CD4-positive, alpha-beta memory T cell (primary cell): ENCODE measurements at regions of chr18 and their contacts with region 1.

Region 1: DNA sequence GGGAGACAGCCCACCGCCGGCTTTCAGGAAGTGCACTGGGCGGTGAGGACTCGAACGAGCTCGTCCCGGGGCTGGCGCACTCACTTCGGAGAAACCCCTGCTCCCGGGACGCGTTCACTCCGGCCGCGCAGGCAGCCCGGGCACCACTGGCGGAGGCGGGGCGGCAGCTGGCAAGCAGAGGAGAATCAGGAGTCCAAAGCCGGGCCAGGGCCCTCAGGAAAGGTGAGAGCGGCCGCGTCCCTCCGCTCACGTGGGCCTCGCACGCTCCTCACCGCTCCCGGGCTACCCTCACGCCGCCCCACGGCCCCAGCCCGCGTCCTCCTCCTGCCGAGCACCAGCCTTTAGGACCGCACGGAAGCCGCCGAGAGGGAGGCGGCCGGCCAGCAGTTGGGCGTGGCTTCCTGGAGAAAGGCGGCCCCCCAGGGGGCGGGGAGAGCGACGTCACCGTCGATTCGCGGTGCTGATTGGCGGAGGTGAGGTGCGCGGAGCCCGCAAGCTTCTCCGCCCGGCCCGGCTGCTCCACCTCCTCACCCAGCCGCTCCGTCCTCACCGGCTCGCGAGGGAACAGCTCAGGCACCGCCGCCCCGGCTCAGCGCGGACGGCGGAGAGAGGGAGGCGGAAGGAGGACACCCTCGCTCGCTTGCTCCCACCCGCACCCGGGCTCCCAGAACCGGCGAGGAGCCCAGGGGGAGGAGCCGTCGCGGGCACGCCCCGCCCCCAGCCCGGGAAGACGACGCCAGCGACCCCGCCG is at the start of gene ZCCHC2:
- DNase-seq: peak; percentile 97 to 100 (median 98)
- H3K4me3 ChIP-seq: peak within 1 kb of the TSS; percentile 38 to 98
- H3K4me3 Mint-ChIP-seq: peak within 1 kb of the TSS; percentile 90 to 99 (median 96)
- H3K27ac ChIP-seq: peak within 1 kb of the TSS; percentile 93
- H3K27ac Mint-ChIP-seq: peak within 1 kb of the TSS; percentile 80 to 96 (median 87)
- H3K4me1 ChIP-seq: peaks cover 34% of the 10 kb centered on the region
- H3K4me1 Mint-ChIP-seq: peaks cover 21 to 45% (median 32%) of the 10 kb centered on the region in 4 donors
- H3K27me3 ChIP-seq: no peaks in the 10 kb centered on the region
- H3K27me3 Mint-ChIP-seq: no peaks in the 10 kb centered on the region
- total RNA-seq, gene ZCCHC2: 51.7 to 52.2 TPM

Region 2: DNA sequence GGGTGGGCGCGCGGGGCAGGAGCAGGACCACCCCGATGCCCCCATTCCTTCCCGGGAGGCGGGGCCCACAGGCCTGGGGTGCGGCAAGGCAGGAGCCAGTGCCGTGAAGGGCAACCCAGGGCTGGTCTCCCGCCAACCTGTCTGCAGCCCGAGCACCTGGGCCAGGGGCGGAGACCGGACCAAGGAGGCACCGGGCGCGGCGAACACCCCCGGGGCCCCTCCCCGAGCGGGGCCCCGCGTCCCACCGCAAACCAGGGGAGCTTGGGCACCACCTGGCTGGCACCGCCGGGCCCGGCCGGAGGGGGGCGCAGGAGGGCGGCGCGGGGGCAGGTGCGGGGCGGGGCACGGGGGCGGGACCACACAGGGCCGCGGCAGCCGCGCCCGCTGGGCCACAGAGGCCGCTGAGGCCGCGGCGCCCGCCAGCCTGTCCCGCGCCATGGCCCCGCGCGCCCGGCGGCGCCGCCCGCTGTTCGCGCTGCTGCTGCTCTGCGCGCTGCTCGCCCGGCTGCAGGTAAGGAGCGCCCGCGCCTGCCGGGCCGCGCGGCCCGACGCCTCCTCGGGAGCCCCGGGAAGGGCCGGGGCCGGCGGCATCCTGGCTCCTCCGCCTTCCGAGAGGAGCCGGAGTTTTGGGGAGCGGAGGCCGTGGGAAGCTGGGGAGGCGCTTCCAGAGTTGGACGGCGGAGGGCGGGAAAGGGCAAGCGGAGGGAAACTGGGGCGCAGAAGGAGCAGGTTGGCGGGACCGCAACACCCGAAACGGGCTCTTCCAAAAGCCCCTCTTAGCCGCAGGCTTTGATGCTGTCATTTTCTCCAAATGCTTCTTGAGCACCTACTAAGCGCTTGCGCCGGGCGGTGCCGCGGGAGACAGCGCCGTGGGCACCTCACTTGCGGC is 197.5 kb before region 1 on chr18 and contains the start of gene TNFRSF11A:
- CTCF ChIA-PET with region 1: no interaction called
- POLR2A ChIA-PET with region 1: no interaction called
- intact Hi-C with region 1: loop called (anchors 5 kb)
- DNase-seq: peak; percentile 46 to 60 (median 51)
- H3K4me3 ChIP-seq: peak within 1 kb of the TSS; percentile 22 to 58
- H3K4me3 Mint-ChIP-seq: peak within 1 kb of the TSS; percentile 70 to 92 (median 86)
- H3K27ac ChIP-seq: no peak within 1 kb of the TSS
- H3K27ac Mint-ChIP-seq: peak within 1 kb of the TSS in 5 of 7 donors; percentile 20 to 91 (median 82)
- H3K4me1 ChIP-seq: peaks cover 19% of the 10 kb centered on the region
- H3K4me1 Mint-ChIP-seq: peaks cover 15 to 40% (median 26%) of the 10 kb centered on the region in 4 donors
- H3K27me3 ChIP-seq: peaks cover 35% of the 10 kb centered on the region
- H3K27me3 Mint-ChIP-seq: peaks cover 53 to 57% of the 10 kb centered on the region in 2 donors
- total RNA-seq, gene TNFRSF11A: 1.3 TPM

Region 3: GRCh38 chr18:62425465-62426195 is 97.0 kb before region 1 on chr18:
- CTCF ChIA-PET with region 1: interaction called, 10 read pairs
- POLR2A ChIA-PET with region 1: interaction called, 21 read pairs
- intact Hi-C with region 1: no loop called
- DNase-seq: peak; percentile 50 to 63 (median 61)
- H3K4me3 ChIP-seq: no peak overlapping the region
- H3K4me3 Mint-ChIP-seq: peak overlapping the region in 1 of 8 donors; percentile 18
- H3K27ac ChIP-seq: no peak overlapping the region
- H3K27ac Mint-ChIP-seq: peak overlapping the region in 4 of 7 donors; percentile 19 to 66 (median 52)
- H3K4me1 ChIP-seq: peaks cover 8% of the 10 kb centered on the region
- H3K4me1 Mint-ChIP-seq: peaks cover 13 to 16% (median 16%) of the 10 kb centered on the region in 4 donors
- H3K27me3 ChIP-seq: no peaks in the 10 kb centered on the region
- H3K27me3 Mint-ChIP-seq: peaks cover 0 to 3% of the 10 kb centered on the region in 2 donors

Region 4: GRCh38 chr18:62505669-62506494 is 16.8 kb before region 1 on chr18:
- CTCF ChIA-PET with region 1: interaction called, 10 read pairs
- POLR2A ChIA-PET with region 1: interaction called, 64 read pairs
- intact Hi-C with region 1: loop called (anchors 1 kb)
- DNase-seq: peak in 4 of 5 donors; percentile 38 to 48 (median 42)
- H3K4me3 ChIP-seq: peak overlapping the region; percentile 56 to 91
- H3K4me3 Mint-ChIP-seq: peak overlapping the region; percentile 85 to 95 (median 90)
- H3K27ac ChIP-seq: peak overlapping the region; percentile 72
- H3K27ac Mint-ChIP-seq: peak overlapping the region; percentile 90 to 98 (median 94)
- H3K4me1 ChIP-seq: peaks cover 16% of the 10 kb centered on the region
- H3K4me1 Mint-ChIP-seq: peaks cover 11 to 23% (median 17%) of the 10 kb centered on the region in 4 donors
- H3K27me3 ChIP-seq: no peaks in the 10 kb centered on the region
- H3K27me3 Mint-ChIP-seq: no peaks in the 10 kb centered on the region

Region 5: GRCh38 chr18:62637807-62638687 is 115.4 kb after region 1 on chr18:
- CTCF ChIA-PET with region 1: no interaction called
- POLR2A ChIA-PET with region 1: no interaction called
- intact Hi-C with region 1: no loop called
- DNase-seq: peak; percentile 32 to 46 (median 36)
- H3K4me3 ChIP-seq: no peak overlapping the region
- H3K4me3 Mint-ChIP-seq: no peak overlapping the region
- H3K27ac ChIP-seq: no peak overlapping the region
- H3K27ac Mint-ChIP-seq: no peak overlapping the region
- H3K4me1 ChIP-seq: no peaks in the 10 kb centered on the region
- H3K4me1 Mint-ChIP-seq: peaks cover 0 to 3% (median 0%) of the 10 kb centered on the region in 4 donors
- H3K27me3 ChIP-seq: peaks cover 3% of the 10 kb centered on the region
- H3K27me3 Mint-ChIP-seq: peaks cover 13 to 28% of the 10 kb centered on the region in 2 donors

Region 6: GRCh38 chr18:63367053-63367953 is 844.6 kb after region 1 on chr18 and contains the start of gene KDSR:
- CTCF ChIA-PET with region 1: no interaction called
- POLR2A ChIA-PET with region 1: interaction called, 4 read pairs
- intact Hi-C with region 1: loop called (anchors 2 kb)
- DNase-seq: peak; percentile 81 to 84 (median 81)
- H3K4me3 ChIP-seq: peak within 1 kb of the TSS; percentile 90 to 98
- H3K4me3 Mint-ChIP-seq: peak within 1 kb of the TSS; percentile 91 to 98 (median 97)
- H3K27ac ChIP-seq: peak within 1 kb of the TSS; percentile 71
- H3K27ac Mint-ChIP-seq: peak within 1 kb of the TSS; percentile 88 to 95 (median 94)
- H3K4me1 ChIP-seq: peaks cover 39% of the 10 kb centered on the region
- H3K4me1 Mint-ChIP-seq: peaks cover 27 to 55% (median 39%) of the 10 kb centered on the region in 4 donors
- H3K27me3 ChIP-seq: no peaks in the 10 kb centered on the region
- H3K27me3 Mint-ChIP-seq: no peaks in the 10 kb centered on the region
- total RNA-seq, gene KDSR: 59.4 to 61.7 TPM

Region 7: DNA sequence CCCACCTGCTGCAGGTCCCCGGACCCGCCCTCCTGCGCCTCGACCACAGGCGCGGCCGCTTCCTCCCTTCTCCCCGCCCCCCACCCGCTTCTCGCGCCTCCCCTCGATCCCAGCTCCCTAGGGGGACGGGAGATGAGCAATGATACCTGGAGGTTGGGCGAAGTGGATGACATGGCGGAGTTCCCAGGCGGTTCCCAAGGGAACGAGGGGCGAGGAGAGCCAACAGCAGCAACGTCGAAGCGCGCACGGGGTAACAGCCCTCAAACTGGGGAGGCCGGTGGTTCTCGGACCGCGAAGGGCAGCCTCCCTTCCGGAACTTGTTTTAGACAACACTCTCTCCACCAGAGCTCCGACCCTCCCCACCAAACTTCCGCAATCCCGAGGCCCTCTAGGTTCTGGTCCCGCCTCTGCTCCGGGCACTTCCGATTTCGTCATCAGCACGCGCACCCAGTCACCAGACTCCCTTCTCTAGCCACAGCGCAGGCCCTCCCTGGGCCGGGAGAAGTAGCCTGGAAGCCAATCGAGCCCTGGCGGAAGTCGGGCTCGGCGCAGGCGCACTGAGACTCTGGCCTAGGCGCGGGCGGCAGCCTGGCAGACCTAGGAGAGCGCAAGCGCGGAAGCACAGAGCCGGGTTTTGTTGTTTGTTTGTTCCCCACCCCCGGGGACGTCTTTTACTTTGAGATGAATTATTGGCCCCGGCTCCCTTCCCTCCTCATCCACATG is 899.6 kb after region 1 on chr18 and contains the start of gene VPS4B:
- CTCF ChIA-PET with region 1: no interaction called
- POLR2A ChIA-PET with region 1: interaction called, 12 read pairs
- intact Hi-C with region 1: loop called (anchors 1 kb)
- DNase-seq: peak; percentile 99 to 100 (median 100)
- H3K4me3 ChIP-seq: peak within 1 kb of the TSS; percentile 73 to 98
- H3K4me3 Mint-ChIP-seq: peak within 1 kb of the TSS; percentile 94 to 100 (median 96)
- H3K27ac ChIP-seq: peak within 1 kb of the TSS; percentile 98
- H3K27ac Mint-ChIP-seq: peak within 1 kb of the TSS; percentile 94 to 99 (median 97)
- H3K4me1 ChIP-seq: peaks cover 55% of the 10 kb centered on the region
- H3K4me1 Mint-ChIP-seq: peaks cover 19 to 29% (median 21%) of the 10 kb centered on the region in 4 donors
- H3K27me3 ChIP-seq: no peaks in the 10 kb centered on the region
- H3K27me3 Mint-ChIP-seq: peaks cover 3 to 5% of the 10 kb centered on the region in 2 donors
- total RNA-seq, gene VPS4B: 93.0 to 94.9 TPM